WTC11 (cell line): ENCODE measurements at regions of chr11 and their contacts with region 1.

Region 1: DNA sequence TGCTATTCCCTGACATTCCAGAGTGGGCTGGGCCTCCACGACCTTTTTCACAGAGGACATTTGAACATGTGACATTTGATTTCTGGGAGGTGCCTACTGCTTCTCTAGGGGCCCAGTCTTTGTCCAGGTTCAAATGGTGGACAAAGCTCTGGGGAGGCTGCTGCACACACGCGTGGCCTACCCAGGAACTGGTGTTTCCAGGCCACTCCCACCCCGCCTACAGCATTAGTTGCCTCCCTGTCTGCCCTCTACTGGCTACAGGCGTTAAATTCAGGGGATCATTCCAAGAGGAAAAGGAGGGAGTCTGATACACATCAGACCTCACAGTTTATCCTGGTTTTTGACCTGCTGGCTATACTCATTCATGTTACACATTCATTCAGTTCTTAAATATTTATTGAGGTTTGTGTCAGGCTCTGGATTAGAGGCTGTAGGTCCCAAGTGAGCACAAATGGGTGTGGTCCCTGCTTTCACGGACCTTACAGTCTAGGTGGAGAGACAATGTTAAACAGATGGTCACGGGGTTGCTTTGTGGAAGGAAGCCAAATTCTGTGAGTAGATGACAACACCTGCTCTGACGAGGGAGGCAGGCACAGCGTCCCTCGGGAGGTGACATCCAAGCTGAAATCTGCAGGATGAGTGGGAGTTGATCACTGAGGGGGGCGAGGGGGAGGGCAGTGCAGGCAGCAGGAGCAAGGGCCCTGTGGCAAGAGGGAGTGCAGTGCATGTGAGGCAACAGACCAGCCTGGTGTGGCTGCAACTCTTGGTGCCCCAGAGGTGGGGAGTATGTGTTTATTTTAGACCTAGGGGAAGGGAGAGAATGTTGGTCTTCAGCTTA is 11.8 kb downstream of the TUB start:
- DNase-seq: peak; percentile 70
- ATAC-seq: peak; percentile 83
- H3K4me3 Mint-ChIP-seq: no peak overlapping the region
- H3K27ac Mint-ChIP-seq: no peak overlapping the region
- H3K4me1 Mint-ChIP-seq: peaks cover 5% of the 10 kb centered on the region
- H3K27me3 Mint-ChIP-seq: no peaks in the 10 kb centered on the region
- CTCF ChIP-seq: peak; percentile 36; the same call in 1 of the 2 replicates

Region 2: DNA sequence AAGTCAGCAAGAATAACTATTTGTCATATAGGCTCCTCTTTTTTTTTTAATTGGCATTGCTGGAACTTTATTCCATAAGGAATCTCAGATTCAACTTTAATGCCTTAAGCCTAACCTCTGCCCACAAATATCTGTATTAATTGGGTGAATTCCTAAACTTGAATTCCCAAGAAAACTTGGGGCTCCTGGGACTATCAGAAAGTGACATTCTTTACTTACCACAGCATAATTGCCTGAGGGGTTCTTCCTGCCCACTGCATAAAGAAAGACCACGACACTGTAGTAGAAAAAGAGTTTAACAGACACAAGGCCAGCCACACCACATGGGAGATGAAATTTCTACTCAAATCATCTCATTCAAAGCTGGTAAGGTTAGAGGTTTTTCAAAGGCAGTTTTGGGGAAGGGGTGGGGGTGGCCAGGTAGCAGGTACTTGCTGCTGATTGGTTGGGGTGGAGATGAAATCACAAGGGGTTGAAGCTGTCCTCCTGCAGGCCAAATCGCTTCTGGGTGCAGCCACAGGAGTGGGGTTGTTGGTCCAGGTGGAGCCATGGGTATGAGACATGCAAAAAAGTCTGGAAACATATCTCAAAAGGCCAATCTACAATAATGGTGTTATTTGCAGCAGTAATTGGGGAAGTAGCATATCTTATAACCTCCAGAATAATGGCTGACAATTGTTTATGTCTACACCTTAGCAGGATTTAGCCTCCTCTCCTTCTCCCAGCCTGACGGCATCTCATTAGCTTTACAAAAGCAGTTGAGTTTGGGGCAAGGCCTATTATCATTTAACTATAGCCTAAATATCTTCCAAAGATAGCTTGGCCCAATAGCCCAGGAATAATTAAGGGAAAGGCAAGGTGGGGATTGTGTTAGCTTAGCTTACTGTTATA is 122.8 kb before region 1 on chr11:
- CTCF ChIA-PET with region 1: no interaction called
- POLR2A ChIA-PET with region 1: no interaction called
- DNase-seq: peak; percentile 19
- ATAC-seq: peak; percentile 86
- H3K4me3 Mint-ChIP-seq: peak overlapping the region; percentile 46
- H3K27ac Mint-ChIP-seq: peak overlapping the region; percentile 69
- H3K4me1 Mint-ChIP-seq: peaks cover 44% of the 10 kb centered on the region
- H3K27me3 Mint-ChIP-seq: no peaks in the 10 kb centered on the region; the same call in 1 of the 2 replicates
- CTCF ChIP-seq: no peak

Region 3: GRCh38 chr11:7986768-7987559 is 105.8 kb before region 1 on chr11 and contains the start of gene EIF3F:
- CTCF ChIA-PET with region 1: interaction called, 12 read pairs
- POLR2A ChIA-PET with region 1: interaction called, 5 read pairs
- DNase-seq: peak; percentile 87
- ATAC-seq: peak; percentile 97
- H3K4me3 Mint-ChIP-seq: peak within 1 kb of the TSS; percentile 100
- H3K27ac Mint-ChIP-seq: peak within 1 kb of the TSS; percentile 97
- H3K4me1 Mint-ChIP-seq: peaks cover 22% of the 10 kb centered on the region
- H3K27me3 Mint-ChIP-seq: no peaks in the 10 kb centered on the region
- CTCF ChIP-seq: no peak; the same call in none of the 2 replicates
- total RNA-seq, gene EIF3F: 356 to 379 TPM (median 378 TPM) in 3 replicates

Region 4: DNA sequence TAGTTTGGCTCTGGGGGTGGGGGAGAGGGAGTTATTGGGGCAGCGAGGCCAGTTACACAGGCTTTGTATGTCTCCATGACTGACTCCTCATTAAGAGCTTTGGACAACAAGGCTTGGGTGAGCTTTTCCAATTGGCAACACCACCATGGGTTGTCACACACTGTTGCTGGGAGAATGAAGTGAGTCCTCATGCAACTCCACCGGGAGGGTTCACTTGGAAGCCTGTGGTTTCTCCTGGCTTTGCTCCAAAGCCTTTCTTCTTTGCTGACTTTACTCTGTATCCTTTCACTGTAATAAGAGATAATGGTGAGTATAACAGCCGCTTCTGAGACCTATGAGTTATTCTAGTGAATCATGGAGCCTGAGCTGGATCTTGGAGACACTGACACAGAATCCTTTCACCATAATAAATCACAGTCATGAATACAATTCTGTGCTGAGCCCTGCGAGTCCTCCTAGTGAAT is 80.8 kb before region 1 on chr11:
- CTCF ChIA-PET with region 1: interaction called, 257 read pairs
- POLR2A ChIA-PET with region 1: no interaction called
- DNase-seq: no peak
- ATAC-seq: no peak
- H3K4me3 Mint-ChIP-seq: no peak overlapping the region
- H3K27ac Mint-ChIP-seq: no peak overlapping the region
- H3K4me1 Mint-ChIP-seq: peaks cover 16% of the 10 kb centered on the region
- H3K27me3 Mint-ChIP-seq: peaks cover 34% of the 10 kb centered on the region
- CTCF ChIP-seq: no peak

Region 5: DNA sequence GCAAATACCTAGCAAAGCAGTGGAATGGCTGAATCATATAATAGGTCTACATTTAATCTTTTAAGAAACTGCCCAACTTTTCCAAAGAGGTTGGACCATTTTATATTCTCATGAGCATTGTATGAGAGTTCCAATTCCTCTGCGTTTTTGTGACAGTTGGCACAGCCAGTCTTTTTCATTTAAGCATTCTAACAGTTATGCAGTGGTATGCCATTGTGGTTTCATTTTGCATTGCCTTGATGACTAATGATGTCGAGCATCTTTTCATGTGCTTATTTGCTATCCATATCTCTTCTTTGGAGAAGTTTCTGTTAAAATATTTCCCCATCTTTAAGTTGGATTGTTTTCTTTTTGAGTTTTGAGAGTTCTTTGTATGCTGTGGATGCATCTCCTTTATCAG is 67.0 kb before region 1 on chr11:
- CTCF ChIA-PET with region 1: interaction called, 278 read pairs
- POLR2A ChIA-PET with region 1: no interaction called
- DNase-seq: no peak
- ATAC-seq: no peak
- H3K4me3 Mint-ChIP-seq: no peak overlapping the region
- H3K27ac Mint-ChIP-seq: no peak overlapping the region
- H3K4me1 Mint-ChIP-seq: no peaks in the 10 kb centered on the region
- H3K27me3 Mint-ChIP-seq: peaks cover 21% of the 10 kb centered on the region; the same call in 1 of the 2 replicates
- CTCF ChIP-seq: no peak

Region 6: GRCh38 chr11:8056810-8057463 is 35.9 kb before region 1 on chr11:
- CTCF ChIA-PET with region 1: interaction called, 141 read pairs
- POLR2A ChIA-PET with region 1: no interaction called
- DNase-seq: no peak
- ATAC-seq: no peak
- H3K4me3 Mint-ChIP-seq: no peak overlapping the region
- H3K27ac Mint-ChIP-seq: peak overlapping the region; percentile 37; the same call in 1 of the 2 replicates
- H3K4me1 Mint-ChIP-seq: peaks cover 14% of the 10 kb centered on the region
- H3K27me3 Mint-ChIP-seq: no peaks in the 10 kb centered on the region
- CTCF ChIP-seq: no peak

Region 7: GRCh38 chr11:8080674-8081590 is 11.9 kb before region 1 on chr11 and contains the start of gene TUB:
- CTCF ChIA-PET with region 1: interaction called, 115 read pairs
- POLR2A ChIA-PET with region 1: interaction called, 3 read pairs
- DNase-seq: peak; percentile 70
- ATAC-seq: peak; percentile 44
- H3K4me3 Mint-ChIP-seq: peak within 1 kb of the TSS; percentile 79
- H3K27ac Mint-ChIP-seq: no peak within 1 kb of the TSS
- H3K4me1 Mint-ChIP-seq: peaks cover 48% of the 10 kb centered on the region
- H3K27me3 Mint-ChIP-seq: peaks cover 42% of the 10 kb centered on the region
- CTCF ChIP-seq: no peak
- total RNA-seq, gene TUB: 29.2 to 32.1 TPM (median 30.0 TPM) in 3 replicates